Astrocyte of the cerebellum (primary cell): ENCODE measurements at regions of chr7 and their contacts with region 1.

Region 1: GRCh38 chr7:144941127-144941526 is 105.3 kb upstream of the TPK1 start:
- DNase-seq: no peak
- H3K4me3 ChIP-seq: no peak overlapping the region
- CTCF ChIP-seq: no peak

Region 2: GRCh38 chr7:144975882-144976281 is 34.8 kb after region 1 on chr7:
- in situ Hi-C with region 1: loop called (anchors 5 kb)
- DNase-seq: no peak
- H3K4me3 ChIP-seq: no peak overlapping the region
- CTCF ChIP-seq: no peak